Activated CD4-positive, alpha-beta memory T cell treated with anti-CD3 and anti-CD28 coated beads, Interleukin-2, amount 10 ng/mL, durations not matched to agents 7 days and 5 days (primary cell): ENCODE measurements at regions of chr19 and their contacts with region 1.

Region 1: DNA sequence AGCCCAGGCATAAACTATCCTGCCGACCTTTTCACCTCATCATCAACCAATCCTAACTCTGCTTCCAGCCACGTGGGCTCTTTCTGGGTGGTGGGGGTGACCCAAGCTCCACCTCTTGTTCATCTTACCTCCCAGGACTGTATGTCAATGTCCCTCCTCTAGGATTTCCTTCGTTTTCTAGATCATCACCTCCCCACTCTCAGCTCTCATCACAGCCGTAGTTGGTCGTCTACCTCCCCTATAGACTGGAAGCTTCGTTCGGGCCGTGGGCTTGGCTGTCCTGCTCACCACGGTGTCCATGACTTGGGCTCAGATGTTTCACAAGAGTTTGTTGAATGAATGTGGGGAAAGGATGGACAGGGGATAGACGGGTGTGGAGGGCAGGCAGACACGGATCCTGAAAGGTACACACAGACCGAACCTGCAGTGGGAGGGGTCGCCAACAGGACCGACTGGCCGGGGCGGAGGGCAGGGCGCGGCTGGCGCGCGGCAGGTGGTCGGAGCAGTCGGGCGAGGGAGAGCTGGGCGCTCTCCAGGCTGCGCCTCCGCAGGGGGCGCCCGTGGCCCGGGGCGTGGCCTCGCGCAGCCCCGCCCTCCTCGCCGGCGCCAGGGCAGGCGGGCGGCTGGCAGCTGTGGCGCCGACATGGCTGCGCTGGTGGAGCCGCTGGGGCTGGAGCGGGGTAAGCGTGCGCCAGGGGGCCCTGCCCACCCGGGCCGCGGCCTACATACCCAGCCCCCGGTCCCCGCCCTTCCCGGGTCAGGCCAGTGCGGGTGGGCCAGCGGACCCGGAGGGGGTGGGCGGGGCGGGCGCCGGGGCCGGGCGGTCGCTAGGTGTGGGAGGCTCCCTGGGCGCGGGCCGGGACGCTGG is at the start of gene LIN7B:
- DNase-seq: peak; percentile 79
- H3K4me3 Mint-ChIP-seq: peak within 1 kb of the TSS; percentile 85
- H3K27ac Mint-ChIP-seq: no peak within 1 kb of the TSS
- H3K4me1 Mint-ChIP-seq: peaks cover 36% of the 10 kb centered on the region
- H3K27me3 Mint-ChIP-seq: no peaks in the 10 kb centered on the region
- total RNA-seq, gene LIN7B: 4.3 to 4.7 TPM

Region 2: DNA sequence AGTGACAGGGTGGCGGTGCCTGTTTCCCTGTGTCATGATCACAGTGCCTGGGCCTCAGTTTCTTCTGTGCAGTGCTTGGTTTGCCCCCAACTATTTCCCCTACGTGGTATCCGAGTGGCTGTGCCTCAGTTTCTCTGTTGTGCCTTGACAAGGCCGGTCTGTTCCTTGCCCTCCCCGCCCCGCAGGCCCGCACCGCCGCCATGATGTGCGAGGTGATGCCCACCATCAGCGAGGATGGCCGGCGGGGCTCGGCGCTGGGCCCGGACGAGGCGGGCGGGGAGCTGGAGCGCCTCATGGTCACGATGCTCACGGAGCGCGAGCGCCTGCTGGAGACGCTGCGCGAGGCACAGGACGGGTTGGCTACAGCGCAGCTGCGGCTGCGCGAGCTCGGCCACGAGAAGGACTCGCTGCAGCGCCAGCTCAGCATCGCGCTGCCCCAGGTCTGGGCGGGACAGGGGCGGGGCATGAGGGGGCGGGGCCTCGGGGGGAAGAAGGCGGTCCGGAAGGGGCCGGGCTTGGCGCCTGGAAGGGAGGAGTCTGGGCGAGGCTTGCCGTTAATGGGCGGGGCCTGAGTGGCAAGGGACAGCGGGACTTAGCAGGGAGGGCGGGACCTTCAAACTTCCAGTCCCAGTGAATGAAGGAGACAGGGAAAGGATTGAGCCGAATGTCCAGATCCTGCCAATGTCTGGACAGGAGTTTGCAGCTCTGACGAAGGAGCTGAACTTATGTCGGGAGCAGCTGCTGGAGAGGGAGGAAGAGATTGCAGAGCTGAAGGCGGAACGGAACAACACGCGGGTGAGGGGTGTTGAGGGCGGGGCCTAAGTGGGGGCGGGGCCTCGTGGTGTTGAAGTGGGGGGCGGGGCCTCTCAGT is 13.9 kb after region 1 on chr19:
- CTCF ChIA-PET with region 1: interaction called, 28 read pairs
- POLR2A ChIA-PET with region 1: interaction called, 6 read pairs
- DNase-seq: peak; percentile 96
- H3K4me3 Mint-ChIP-seq: peak overlapping the region; percentile 80
- H3K27ac Mint-ChIP-seq: peak overlapping the region; percentile 73
- H3K4me1 Mint-ChIP-seq: peaks cover 19% of the 10 kb centered on the region
- H3K27me3 Mint-ChIP-seq: peaks cover 6% of the 10 kb centered on the region

Region 3: GRCh38 chr19:49200238-49200862 is 86.4 kb after region 1 on chr19:
- CTCF ChIA-PET with region 1: interaction called, 18 read pairs
- POLR2A ChIA-PET with region 1: no interaction called
- DNase-seq: no peak
- H3K4me3 Mint-ChIP-seq: no peak overlapping the region
- H3K27ac Mint-ChIP-seq: no peak overlapping the region
- H3K4me1 Mint-ChIP-seq: peaks cover 6% of the 10 kb centered on the region
- H3K27me3 Mint-ChIP-seq: peaks cover 3% of the 10 kb centered on the region

Region 4: DNA sequence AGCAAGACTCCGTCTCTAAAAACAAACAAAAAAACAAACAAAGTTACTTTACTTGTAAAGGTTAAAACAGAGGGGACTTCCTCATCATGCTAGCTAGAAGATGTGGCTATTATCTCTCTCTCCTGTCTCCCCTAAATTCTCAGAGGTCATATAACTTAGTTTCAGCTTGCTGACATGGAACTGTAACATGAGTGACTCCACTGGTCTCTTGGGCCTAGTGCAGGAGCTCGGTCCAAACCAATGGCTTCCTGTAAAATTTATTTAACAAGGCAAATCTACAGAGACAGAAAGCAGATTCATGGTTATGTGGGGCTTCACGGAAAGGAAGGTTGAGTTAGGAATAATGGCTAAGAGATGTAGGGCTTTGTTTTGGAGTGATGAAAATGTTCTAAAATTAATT is 264.5 kb after region 1 on chr19:
- CTCF ChIA-PET with region 1: no interaction called
- POLR2A ChIA-PET with region 1: no interaction called
- DNase-seq: no peak
- H3K4me3 Mint-ChIP-seq: no peak overlapping the region
- H3K27ac Mint-ChIP-seq: no peak overlapping the region
- H3K4me1 Mint-ChIP-seq: no peaks in the 10 kb centered on the region
- H3K27me3 Mint-ChIP-seq: peaks cover 6% of the 10 kb centered on the region